ENCODE measurements at regions of chr20 and their contacts with region 1.

Region 1: GRCh38 chr20:21125849-21126580 is at the start of gene KIZ:
- H3K4me3 Mint-ChIP-seq: peak within 1 kb of the TSS; percentile 93
- H3K27ac Mint-ChIP-seq: peak within 1 kb of the TSS; percentile 90
- H3K4me1 Mint-ChIP-seq: peaks cover 20% of the 10 kb centered on the region
- H3K27me3 Mint-ChIP-seq: peaks cover 8% of the 10 kb centered on the region

Region 2: GRCh38 chr20:20690676-20691476 is 435.1 kb before region 1 on chr20:
- intact Hi-C with region 1: loop called (anchors 10 kb)
- H3K4me3 Mint-ChIP-seq: no peak overlapping the region
- H3K27ac Mint-ChIP-seq: no peak overlapping the region
- H3K4me1 Mint-ChIP-seq: peaks cover 12% of the 10 kb centered on the region
- H3K27me3 Mint-ChIP-seq: no peaks in the 10 kb centered on the region

Region 3: GRCh38 chr20:20713244-20713722 is 412.7 kb before region 1 on chr20:
- intact Hi-C with region 1: no loop called
- H3K4me3 Mint-ChIP-seq: peak overlapping the region; percentile 94
- H3K27ac Mint-ChIP-seq: peak overlapping the region; percentile 95
- H3K4me1 Mint-ChIP-seq: peaks cover 36% of the 10 kb centered on the region
- H3K27me3 Mint-ChIP-seq: no peaks in the 10 kb centered on the region

Region 4: GRCh38 chr20:21074605-21075336 is 51.2 kb before region 1 on chr20:
- intact Hi-C with region 1: no loop called
- H3K4me3 Mint-ChIP-seq: no peak overlapping the region
- H3K27ac Mint-ChIP-seq: no peak overlapping the region
- H3K4me1 Mint-ChIP-seq: no peaks in the 10 kb centered on the region
- H3K27me3 Mint-ChIP-seq: peaks cover 40% of the 10 kb centered on the region

Region 5: DNA sequence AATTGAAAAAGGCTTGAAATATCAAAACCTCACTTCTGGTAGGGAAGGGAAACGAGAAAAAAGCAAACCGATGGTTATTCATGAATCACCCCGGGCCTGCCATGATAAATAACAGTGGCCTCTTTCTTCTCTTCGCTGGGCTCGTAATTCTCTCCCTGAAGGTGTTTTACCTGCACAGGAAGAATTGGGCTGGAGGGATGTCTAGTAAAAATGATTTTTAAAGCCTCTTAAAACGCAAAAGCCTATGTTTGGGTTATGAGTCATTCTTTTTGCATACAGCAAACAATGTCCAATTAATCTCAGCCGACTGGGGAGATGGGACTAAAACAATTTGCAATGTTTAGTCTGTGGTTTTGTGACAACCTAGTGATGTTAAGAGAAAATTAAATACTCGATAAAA is 36.6 kb before region 1 on chr20:
- intact Hi-C with region 1: no loop called
- H3K4me3 Mint-ChIP-seq: no peak overlapping the region
- H3K27ac Mint-ChIP-seq: peak overlapping the region; percentile 70
- H3K4me1 Mint-ChIP-seq: peaks cover 14% of the 10 kb centered on the region
- H3K27me3 Mint-ChIP-seq: peaks cover 52% of the 10 kb centered on the region

Region 6: DNA sequence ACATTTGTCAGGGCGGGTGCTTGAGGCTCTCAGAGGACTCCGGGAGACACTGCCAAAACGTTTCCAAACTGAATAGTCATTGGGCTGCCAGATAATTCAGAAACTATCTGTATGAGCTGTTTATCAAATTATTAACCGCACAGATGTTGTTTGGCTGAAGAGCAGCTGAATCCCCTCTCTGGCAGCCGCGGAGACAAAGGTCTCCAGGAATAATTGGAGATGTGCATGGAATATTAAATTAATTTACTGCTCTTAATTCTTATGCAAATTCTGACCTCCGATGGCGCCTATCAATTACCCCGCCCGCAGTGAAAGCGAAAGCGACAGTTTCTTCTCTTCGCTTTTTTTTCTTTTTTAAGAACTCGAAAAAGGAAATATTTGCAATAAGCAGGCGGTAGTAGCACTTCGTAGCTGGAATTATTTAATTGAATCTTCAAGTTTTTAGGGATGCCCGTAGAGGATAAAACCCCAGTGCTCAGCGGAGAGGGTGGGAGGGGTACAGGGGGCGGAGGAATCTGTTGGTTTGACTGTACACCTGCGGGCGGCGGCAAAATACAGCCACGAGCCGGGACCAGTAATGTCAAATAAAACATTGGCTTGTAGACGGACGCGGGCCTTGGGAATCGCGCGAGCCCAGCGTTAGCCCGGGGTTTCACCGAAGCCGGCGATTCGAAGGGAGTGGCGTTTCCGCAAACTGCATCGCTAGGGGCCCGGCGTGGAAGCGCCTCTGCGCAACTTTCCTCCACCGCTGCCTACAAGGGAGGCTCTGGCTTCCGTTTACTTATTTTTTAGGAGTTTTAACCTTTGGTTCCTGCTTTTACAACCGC is 26.1 kb before region 1 on chr20:
- intact Hi-C with region 1: loop called (anchors 1 kb)
- H3K4me3 Mint-ChIP-seq: peak overlapping the region; percentile 82
- H3K27ac Mint-ChIP-seq: peak overlapping the region; percentile 88
- H3K4me1 Mint-ChIP-seq: peaks cover 39% of the 10 kb centered on the region
- H3K27me3 Mint-ChIP-seq: peaks cover 83% of the 10 kb centered on the region